GM12878 (cell line): ENCODE measurements at regions of chrX and their contacts with region 1.

Region 1: DNA sequence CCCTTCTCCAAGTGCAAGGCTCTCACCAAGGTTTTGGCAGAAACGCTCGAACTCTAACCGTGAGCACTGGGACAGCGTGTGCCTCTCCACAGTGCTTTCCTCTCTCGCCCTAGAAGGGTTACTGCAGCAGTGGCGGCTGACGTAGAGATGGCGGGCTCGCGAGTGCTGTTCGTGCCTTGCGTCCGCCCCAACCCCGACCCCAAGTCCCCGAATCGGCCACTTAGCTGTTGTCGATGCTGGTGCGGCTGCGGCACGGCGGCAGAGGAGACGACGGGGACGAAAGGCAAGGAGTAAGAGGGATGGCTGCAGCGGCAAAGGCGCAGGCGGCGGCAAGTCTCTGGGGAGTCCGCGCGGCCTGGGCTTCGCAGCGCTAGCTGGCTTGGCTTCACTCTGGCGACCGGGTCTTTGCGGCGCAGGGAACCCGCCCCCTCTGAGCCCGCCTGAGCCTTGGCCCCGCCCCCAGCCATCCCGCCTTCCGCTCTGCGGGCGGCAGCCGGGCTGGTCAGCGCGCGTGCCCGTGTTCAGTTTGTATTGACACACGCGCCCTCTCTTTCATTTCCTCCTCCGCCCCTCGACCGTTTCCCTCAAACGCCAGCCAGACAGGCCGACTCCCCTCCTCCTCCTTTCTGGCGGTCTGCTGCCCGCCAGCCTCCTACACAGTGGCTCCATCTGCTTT is at the start of gene SPIN4:
- DNase-seq: peak; percentile 39
- ATAC-seq: peak; percentile 95
- H3K4me3 ChIP-seq: peak within 1 kb of the TSS; percentile 64
- H3K27ac ChIP-seq: peak within 1 kb of the TSS; percentile 14
- H3K4me1 ChIP-seq: no peaks in the 10 kb centered on the region
- H3K27me3 ChIP-seq: no peaks in the 10 kb centered on the region
- CTCF ChIP-seq: no peak
- EP300 ChIP-seq: no peak
- POLR2A ChIP-seq: peak; percentile 88
- RAD21 ChIP-seq: no peak
- polyA plus RNA-seq, gene SPIN4: 3.3 to 3.9 TPM

Region 2: DNA sequence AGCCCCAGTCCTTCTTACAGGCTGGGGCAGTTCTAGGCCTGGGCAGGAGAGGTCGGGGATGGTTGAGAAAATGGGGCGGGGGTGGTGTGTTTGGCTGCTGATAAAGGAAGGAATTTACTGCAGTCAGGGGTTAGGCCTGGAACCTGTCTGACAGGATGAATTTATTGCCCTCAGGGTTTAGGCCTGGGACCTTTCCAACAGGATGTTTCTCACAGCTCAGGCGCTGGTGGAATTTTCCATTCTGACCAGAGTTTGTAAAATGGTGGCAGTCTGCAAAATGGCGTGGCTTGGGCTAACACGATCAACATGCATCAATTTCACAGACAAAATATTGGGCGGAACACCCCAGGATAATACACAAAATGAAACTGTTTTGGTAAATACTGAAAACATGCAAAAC is 83.6 kb after region 1 on chrX:
- CTCF ChIA-PET with region 1: no interaction called
- POLR2A ChIA-PET with region 1: no interaction called
- RAD21 ChIA-PET with region 1: no interaction called
- SMC1A ChIA-PET with region 1: no interaction called
- in situ Hi-C with region 1: no loop called
- intact Hi-C with region 1: no loop called
- DNase-seq: no peak
- ATAC-seq: no peak
- H3K4me3 ChIP-seq: no peak overlapping the region
- H3K27ac ChIP-seq: no peak overlapping the region
- H3K4me1 ChIP-seq: no peaks in the 10 kb centered on the region
- H3K27me3 ChIP-seq: no peaks in the 10 kb centered on the region
- CTCF ChIP-seq: no peak
- EP300 ChIP-seq: no peak
- POLR2A ChIP-seq: no peak
- RAD21 ChIP-seq: no peak

Region 3: DNA sequence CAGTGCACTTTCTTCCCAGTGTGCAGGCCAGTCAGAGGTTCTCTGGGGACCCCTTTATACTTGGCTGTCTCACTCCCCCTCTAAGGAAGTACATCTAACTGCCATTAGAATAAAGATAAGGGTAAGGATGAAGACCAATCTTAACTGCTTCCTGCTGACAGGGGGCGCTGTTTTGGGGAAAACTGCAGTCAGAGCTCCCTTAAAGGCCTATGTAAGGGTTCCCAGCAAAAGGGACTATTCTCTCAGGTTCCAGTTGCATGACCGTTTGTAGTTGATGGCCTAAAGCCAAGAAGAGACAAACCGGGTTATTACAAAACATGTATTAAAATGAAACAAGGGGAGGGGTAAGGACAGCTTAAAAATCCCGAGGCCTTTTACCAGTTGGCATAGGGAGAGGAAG is 115.6 kb after region 1 on chrX:
- CTCF ChIA-PET with region 1: no interaction called
- POLR2A ChIA-PET with region 1: no interaction called
- RAD21 ChIA-PET with region 1: no interaction called
- SMC1A ChIA-PET with region 1: no interaction called
- in situ Hi-C with region 1: no loop called
- intact Hi-C with region 1: loop called (anchors 10 kb)
- DNase-seq: no peak
- ATAC-seq: no peak
- H3K4me3 ChIP-seq: no peak overlapping the region
- H3K27ac ChIP-seq: no peak overlapping the region
- H3K4me1 ChIP-seq: no peaks in the 10 kb centered on the region
- H3K27me3 ChIP-seq: no peaks in the 10 kb centered on the region
- CTCF ChIP-seq: no peak
- EP300 ChIP-seq: no peak
- POLR2A ChIP-seq: no peak
- RAD21 ChIP-seq: no peak

Region 4: GRCh38 chrX:63506320-63506719 is 155.2 kb after region 1 on chrX:
- CTCF ChIA-PET with region 1: no interaction called
- POLR2A ChIA-PET with region 1: no interaction called
- RAD21 ChIA-PET with region 1: no interaction called
- SMC1A ChIA-PET with region 1: no interaction called
- in situ Hi-C with region 1: no loop called
- intact Hi-C with region 1: loop called (anchors 10 kb)
- DNase-seq: no peak
- ATAC-seq: peak; percentile 65
- H3K4me3 ChIP-seq: no peak overlapping the region
- H3K27ac ChIP-seq: no peak overlapping the region
- H3K4me1 ChIP-seq: no peaks in the 10 kb centered on the region
- H3K27me3 ChIP-seq: no peaks in the 10 kb centered on the region
- CTCF ChIP-seq: peak in 2 of 3 experiments; percentile 29 to 39; a peak in 3 of 6 replicates
- EP300 ChIP-seq: no peak
- POLR2A ChIP-seq: no peak
- RAD21 ChIP-seq: peak; percentile 52

Region 5: DNA sequence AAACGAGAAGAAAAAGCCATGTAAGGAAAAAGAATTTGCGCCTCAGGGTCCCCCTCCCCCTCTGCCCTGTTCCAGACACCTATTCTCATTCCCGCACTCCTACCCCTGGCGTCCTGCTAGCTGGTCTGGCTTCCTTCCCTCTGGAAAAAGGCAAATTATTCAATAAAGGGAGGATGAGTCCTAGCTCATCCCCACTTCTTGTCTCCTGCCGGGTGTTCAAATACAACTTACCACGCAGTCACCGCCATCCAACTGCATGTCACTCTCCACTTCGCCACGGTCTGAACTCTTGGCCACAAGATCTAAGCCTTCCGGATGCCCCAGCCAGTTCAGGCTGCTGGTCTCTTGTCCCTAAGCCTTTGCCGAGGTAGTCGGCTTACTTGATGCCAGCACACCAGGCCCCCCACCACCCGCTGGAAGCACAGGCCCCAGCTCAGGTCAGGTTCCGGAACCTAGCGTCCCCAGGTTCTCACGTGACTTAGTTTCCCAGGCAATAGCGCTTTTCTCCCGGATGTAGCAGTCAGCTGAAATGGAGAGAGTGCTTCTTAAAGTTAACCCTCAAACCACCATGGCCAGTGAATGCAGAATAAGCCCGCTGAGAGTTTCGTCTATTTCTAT is 209.6 kb after region 1 on chrX:
- CTCF ChIA-PET with region 1: no interaction called
- POLR2A ChIA-PET with region 1: no interaction called
- RAD21 ChIA-PET with region 1: no interaction called
- SMC1A ChIA-PET with region 1: no interaction called
- in situ Hi-C with region 1: no loop called
- intact Hi-C with region 1: loop called (anchors 2 kb)
- DNase-seq: peak; percentile 27
- ATAC-seq: peak; percentile 97
- H3K4me3 ChIP-seq: peak overlapping the region; percentile 77
- H3K27ac ChIP-seq: peak overlapping the region; percentile 22
- H3K4me1 ChIP-seq: no peaks in the 10 kb centered on the region
- H3K27me3 ChIP-seq: no peaks in the 10 kb centered on the region
- CTCF ChIP-seq: no peak
- EP300 ChIP-seq: no peak
- POLR2A ChIP-seq: peak; percentile 68
- RAD21 ChIP-seq: no peak

Region 6: DNA sequence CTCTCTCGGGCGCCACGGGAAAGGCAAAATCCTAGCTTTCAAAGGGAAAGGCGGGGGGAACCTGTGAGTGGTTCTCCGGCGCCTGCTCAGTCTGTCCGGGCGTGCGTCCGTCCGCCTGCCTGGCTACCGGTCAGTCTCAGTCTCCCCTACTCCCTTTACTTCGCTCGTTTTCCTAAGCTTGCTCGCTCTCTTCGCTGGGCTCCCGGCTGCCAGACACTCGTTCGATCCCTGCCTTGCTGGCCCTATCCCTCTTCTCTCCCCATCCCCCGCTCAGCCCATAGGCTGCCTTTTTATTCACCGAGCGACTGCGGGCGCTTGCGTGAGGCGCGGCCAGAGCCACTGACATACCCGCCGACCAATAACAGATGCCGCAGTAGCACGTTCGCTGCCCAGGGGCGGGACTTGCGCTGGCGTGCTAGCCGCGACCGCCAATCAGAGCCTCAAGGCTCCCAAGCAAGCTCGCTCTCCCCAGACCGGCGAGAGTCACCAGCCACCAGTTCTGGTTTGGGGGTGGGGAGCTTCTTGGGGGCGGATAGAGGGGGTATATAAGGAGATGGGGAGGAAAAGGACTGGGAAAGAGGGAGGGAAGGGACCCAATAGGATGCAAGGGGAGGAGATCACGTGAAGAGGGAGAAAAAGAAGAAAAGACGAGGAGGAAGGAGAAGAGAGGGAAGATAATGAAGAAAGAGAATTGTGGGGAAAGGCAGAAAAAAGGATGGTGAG is 403.9 kb after region 1 on chrX:
- CTCF ChIA-PET with region 1: no interaction called
- POLR2A ChIA-PET with region 1: interaction called, 4 read pairs
- RAD21 ChIA-PET with region 1: no interaction called
- SMC1A ChIA-PET with region 1: no interaction called
- in situ Hi-C with region 1: loop called (anchors 5 kb)
- intact Hi-C with region 1: loop called (anchors 5 kb)
- DNase-seq: peak; percentile 73
- ATAC-seq: peak; percentile 96
- H3K4me3 ChIP-seq: peak overlapping the region; percentile 71
- H3K27ac ChIP-seq: peak overlapping the region; percentile 90
- H3K4me1 ChIP-seq: peaks cover 4% of the 10 kb centered on the region; the same call in 1 of the 2 replicates
- H3K27me3 ChIP-seq: no peaks in the 10 kb centered on the region
- CTCF ChIP-seq: no peak
- EP300 ChIP-seq: no peak
- POLR2A ChIP-seq: peak; percentile 89
- RAD21 ChIP-seq: no peak

Region 7: GRCh38 chrX:63761639-63762038 is 410.6 kb after region 1 on chrX:
- CTCF ChIA-PET with region 1: interaction called, 3 read pairs
- POLR2A ChIA-PET with region 1: no interaction called
- RAD21 ChIA-PET with region 1: no interaction called
- SMC1A ChIA-PET with region 1: no interaction called
- in situ Hi-C with region 1: loop called (anchors 5 kb)
- intact Hi-C with region 1: loop called (anchors 5 kb)
- DNase-seq: peak; percentile 34
- ATAC-seq: peak; percentile 81
- H3K4me3 ChIP-seq: no peak overlapping the region
- H3K27ac ChIP-seq: no peak overlapping the region
- H3K4me1 ChIP-seq: peaks cover 8% of the 10 kb centered on the region; the same call in 1 of the 2 replicates
- H3K27me3 ChIP-seq: no peaks in the 10 kb centered on the region
- CTCF ChIP-seq: peak in 1 of 3 experiments; percentile 27; a peak in 2 of 6 replicates
- EP300 ChIP-seq: no peak; a peak in 1 of 4 replicates
- POLR2A ChIP-seq: no peak
- RAD21 ChIP-seq: peak; percentile 62